Activated CD4-positive, alpha-beta T cell treated with anti-CD3 and anti-CD28 coated beads for 36 hours (primary cell): ENCODE measurements at regions of chr19 and their contacts with region 1.

Region 1: GRCh38 chr19:1103708-1104310 is at the start of gene GPX4:
- DNase-seq: peak; percentile 100
- ATAC-seq: peak; percentile 81
- H3K4me3 Mint-ChIP-seq: peak within 1 kb of the TSS; percentile 71
- H3K27ac Mint-ChIP-seq: peak within 1 kb of the TSS; percentile 83
- H3K4me1 Mint-ChIP-seq: peaks cover 52% of the 10 kb centered on the region
- H3K27me3 Mint-ChIP-seq: no peaks in the 10 kb centered on the region
- total RNA-seq, gene GPX4: 192 to 218 TPM

Region 2: DNA sequence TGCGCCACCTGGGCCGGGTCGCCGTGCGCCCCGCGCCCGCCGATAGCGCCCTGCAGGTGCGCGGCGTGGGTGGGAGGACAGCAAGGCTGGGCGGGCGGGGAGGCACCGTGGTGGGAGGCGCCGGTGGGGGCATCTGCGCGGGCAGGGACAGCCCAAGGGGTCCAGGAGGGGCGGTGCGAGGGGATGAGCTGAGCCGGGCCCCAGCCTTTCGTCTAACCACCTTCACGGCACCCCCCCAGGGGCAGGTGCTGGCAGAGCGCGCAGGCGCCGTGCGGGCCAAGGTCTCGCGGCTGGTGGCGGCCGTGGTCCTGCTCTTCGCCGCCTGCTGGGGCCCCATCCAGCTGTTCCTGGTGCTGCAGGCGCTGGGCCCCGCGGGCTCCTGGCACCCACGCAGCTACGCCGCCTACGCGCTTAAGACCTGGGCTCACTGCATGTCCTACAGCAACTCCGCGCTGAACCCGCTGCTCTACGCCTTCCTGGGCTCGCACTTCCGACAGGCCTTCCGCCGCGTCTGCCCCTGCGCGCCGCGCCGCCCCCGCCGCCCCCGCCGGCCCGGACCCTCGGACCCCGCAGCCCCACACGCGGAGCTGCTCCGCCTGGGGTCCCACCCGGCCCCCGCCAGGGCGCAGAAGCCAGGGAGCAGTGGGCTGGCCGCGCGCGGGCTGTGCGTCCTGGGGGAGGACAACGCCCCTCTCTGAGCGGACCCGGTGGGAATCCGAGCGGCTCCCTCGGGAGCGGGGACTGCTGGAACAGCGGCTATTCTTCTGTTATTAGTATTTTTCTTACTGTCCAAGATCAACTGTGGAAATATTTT is 183.6 kb before region 1 on chr19:
- CTCF ChIA-PET with region 1: interaction called, 3 read pairs
- POLR2A ChIA-PET with region 1: no interaction called
- intact Hi-C with region 1: loop called in 1 of 2 experiments (anchors 1 kb)
- DNase-seq: peak; percentile 86
- ATAC-seq: peak; percentile 36
- H3K4me3 Mint-ChIP-seq: peak overlapping the region; percentile 80
- H3K27ac Mint-ChIP-seq: peak overlapping the region; percentile 90
- H3K4me1 Mint-ChIP-seq: peaks cover 21% of the 10 kb centered on the region
- H3K27me3 Mint-ChIP-seq: no peaks in the 10 kb centered on the region

Region 3: GRCh38 chr19:1026189-1027019 is 77.4 kb before region 1 on chr19 and contains the start of gene CNN2:
- CTCF ChIA-PET with region 1: no interaction called
- POLR2A ChIA-PET with region 1: no interaction called
- intact Hi-C with region 1: loop called (anchors 1 kb)
- DNase-seq: peak; percentile 83
- ATAC-seq: peak; percentile 58
- H3K4me3 Mint-ChIP-seq: peak within 1 kb of the TSS; percentile 88
- H3K27ac Mint-ChIP-seq: peak within 1 kb of the TSS; percentile 87
- H3K4me1 Mint-ChIP-seq: peaks cover 31% of the 10 kb centered on the region
- H3K27me3 Mint-ChIP-seq: no peaks in the 10 kb centered on the region
- total RNA-seq, gene CNN2: 108 to 130 TPM

Region 4: GRCh38 chr19:1082172-1082927 is 21.5 kb before region 1 on chr19:
- CTCF ChIA-PET with region 1: no interaction called
- POLR2A ChIA-PET with region 1: no interaction called
- intact Hi-C with region 1: loop called in 1 of 2 experiments (anchors 1 kb)
- DNase-seq: peak; percentile 96
- ATAC-seq: peak; percentile 71
- H3K4me3 Mint-ChIP-seq: no peak overlapping the region
- H3K27ac Mint-ChIP-seq: no peak overlapping the region
- H3K4me1 Mint-ChIP-seq: peaks cover 60% of the 10 kb centered on the region
- H3K27me3 Mint-ChIP-seq: no peaks in the 10 kb centered on the region

Region 5: DNA sequence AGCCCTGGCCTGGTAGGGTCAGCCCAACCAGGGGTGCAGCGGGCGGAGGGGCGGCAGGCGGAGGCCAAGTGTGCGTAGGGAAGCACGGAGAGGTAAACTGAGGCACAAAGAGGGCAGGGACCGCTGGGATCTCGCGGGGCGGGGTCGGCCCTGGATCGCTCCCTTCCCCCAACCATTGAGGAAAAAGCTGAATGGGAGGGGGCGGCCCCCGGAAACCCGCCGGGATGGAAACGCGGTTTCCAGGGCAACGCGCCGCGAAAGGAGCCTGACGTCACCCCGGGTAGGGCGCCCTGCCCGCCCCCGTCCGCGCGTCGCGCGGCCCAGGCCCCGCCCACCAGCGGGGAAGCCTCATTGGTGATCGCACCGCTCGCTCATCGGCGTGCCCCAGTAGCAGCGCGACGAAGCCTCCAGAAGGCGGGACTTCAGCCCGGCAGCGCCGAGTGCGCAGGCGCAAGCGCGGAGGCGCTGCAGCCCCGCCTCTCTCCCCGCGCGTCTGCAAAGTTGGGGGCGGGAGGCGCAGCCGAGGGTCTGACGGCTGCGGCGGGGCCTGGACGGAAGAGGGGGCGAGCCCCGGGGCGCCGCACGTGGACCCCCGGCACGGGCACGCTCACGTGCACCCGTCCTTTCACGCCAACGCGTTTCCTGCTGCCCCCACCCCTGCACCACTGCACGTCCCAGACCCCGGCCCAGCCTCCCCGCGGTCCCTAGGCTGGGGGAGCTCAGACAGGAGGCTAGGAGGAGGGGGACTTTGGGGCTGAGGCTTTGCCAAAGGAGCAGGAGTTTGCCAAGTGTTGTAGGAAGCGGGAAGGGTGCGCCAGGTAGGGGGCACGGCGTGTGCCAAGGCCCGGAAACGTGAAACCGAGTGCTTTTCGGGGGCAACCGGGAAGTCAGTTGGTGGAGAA is 157.1 kb after region 1 on chr19:
- CTCF ChIA-PET with region 1: interaction called, 3 read pairs
- POLR2A ChIA-PET with region 1: no interaction called
- intact Hi-C with region 1: loop called in 1 of 2 experiments (anchors 2 kb)
- DNase-seq: peak; percentile 99
- ATAC-seq: peak; percentile 82
- H3K4me3 Mint-ChIP-seq: peak overlapping the region; percentile 95
- H3K27ac Mint-ChIP-seq: peak overlapping the region; percentile 87
- H3K4me1 Mint-ChIP-seq: peaks cover 54% of the 10 kb centered on the region
- H3K27me3 Mint-ChIP-seq: no peaks in the 10 kb centered on the region

Region 6: DNA sequence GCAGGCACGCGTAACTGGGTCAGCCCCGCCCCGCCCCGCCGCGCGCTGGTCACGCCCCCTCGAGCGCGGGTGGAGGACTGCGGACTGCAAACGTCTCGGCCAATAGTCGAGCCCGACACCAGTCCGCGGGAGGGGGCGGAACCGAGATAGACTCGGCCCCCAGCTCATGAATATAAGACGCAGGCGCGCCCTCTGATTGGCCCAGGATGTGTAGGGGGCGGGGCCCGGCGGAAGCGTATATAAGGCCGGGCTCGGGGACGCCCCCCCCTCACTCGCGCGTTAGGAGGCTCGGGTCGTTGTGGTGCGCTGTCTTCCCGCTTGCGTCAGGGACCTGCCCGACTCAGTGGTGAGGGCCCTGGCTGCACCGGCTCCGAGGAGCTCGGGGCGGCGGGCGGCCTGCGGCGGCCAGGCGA is 165.3 kb after region 1 on chr19 and contains the start of gene CIRBP:
- CTCF ChIA-PET with region 1: interaction called, 3 read pairs
- POLR2A ChIA-PET with region 1: no interaction called
- intact Hi-C with region 1: loop called in 1 of 2 experiments (anchors 2 kb)
- DNase-seq: peak; percentile 100
- ATAC-seq: peak; percentile 87
- H3K4me3 Mint-ChIP-seq: peak within 1 kb of the TSS; percentile 84
- H3K27ac Mint-ChIP-seq: peak within 1 kb of the TSS; percentile 87
- H3K4me1 Mint-ChIP-seq: peaks cover 66% of the 10 kb centered on the region
- H3K27me3 Mint-ChIP-seq: no peaks in the 10 kb centered on the region
- total RNA-seq, gene CIRBP: 123 to 188 TPM